SK-N-SH (cell line): ENCODE measurements at regions of chr2 and their contacts with region 1.

Region 1: GRCh38 chr2:20635675-20636584 is 15.0 kb downstream of the HS1BP3 start:
- DNase-seq: peak; percentile 98
- H3K4me3 ChIP-seq: peak overlapping the region in 1 of 2 experiments; percentile 27; a peak in 1 of 4 replicates
- H3K27ac ChIP-seq: peak overlapping the region; percentile 9 to 72; a peak in 3 of 4 replicates
- H3K4me1 ChIP-seq: peaks cover 16 to 21% of the 10 kb centered on the region in 2 experiments
- H3K27me3 ChIP-seq: no peaks in the 10 kb centered on the region
- CTCF ChIP-seq: peak; percentile 98
- EP300 ChIP-seq: peak in 1 of 2 experiments; percentile 37; a peak in 2 of 4 replicates
- RAD21 ChIP-seq: peak; percentile 100

Region 2: DNA sequence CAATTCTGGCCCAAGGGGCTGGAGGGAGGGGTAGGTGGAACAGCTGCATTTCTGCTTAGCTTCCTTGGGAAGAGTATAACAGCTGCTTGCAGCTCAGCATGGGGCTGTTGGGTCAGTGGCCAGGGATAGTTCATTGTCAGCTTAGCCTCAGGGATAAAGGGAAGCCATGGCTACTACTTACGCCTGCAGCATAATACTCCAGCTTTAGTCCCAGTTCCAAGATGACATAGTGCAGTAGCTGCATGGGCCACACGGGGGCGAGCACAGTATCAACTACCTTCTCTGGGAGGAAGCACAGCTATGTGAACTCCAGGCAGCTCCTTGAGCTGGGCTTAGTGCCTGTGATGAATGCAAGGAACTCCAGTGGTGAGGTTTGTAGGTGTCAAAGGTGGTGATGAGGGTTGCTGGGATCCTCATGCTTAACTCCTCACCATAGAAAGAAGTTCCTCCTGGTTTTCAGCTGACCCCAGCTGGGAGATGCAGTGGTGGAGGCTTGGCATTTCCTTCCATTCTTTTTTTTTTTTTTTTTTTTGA is 224.5 kb before region 1 on chr2:
- CTCF ChIA-PET with region 1: interaction called, 120 read pairs
- POLR2A ChIA-PET with region 1: no interaction called
- DNase-seq: peak; percentile 77
- H3K4me3 ChIP-seq: no peak overlapping the region
- H3K27ac ChIP-seq: no peak overlapping the region
- H3K4me1 ChIP-seq: no peaks in the 10 kb centered on the region
- H3K27me3 ChIP-seq: peaks cover 9% of the 10 kb centered on the region; the same call in 1 of the 2 replicates
- CTCF ChIP-seq: peak; percentile 87
- EP300 ChIP-seq: no peak
- RAD21 ChIP-seq: peak; percentile 70

Region 3: GRCh38 chr2:20438334-20439192 is 197.4 kb before region 1 on chr2:
- CTCF ChIA-PET with region 1: interaction called, 188 read pairs
- POLR2A ChIA-PET with region 1: interaction called, 6 read pairs
- DNase-seq: no peak
- H3K4me3 ChIP-seq: no peak overlapping the region
- H3K27ac ChIP-seq: peak overlapping the region in 1 of 2 experiments; percentile 6; a peak in 1 of 4 replicates
- H3K4me1 ChIP-seq: peaks cover 2 to 6% of the 10 kb centered on the region in 2 experiments; a peak in 2 of 4 replicates
- H3K27me3 ChIP-seq: no peaks in the 10 kb centered on the region; the same call in 1 of the 2 replicates
- CTCF ChIP-seq: no peak
- EP300 ChIP-seq: no peak
- RAD21 ChIP-seq: no peak

Region 4: DNA sequence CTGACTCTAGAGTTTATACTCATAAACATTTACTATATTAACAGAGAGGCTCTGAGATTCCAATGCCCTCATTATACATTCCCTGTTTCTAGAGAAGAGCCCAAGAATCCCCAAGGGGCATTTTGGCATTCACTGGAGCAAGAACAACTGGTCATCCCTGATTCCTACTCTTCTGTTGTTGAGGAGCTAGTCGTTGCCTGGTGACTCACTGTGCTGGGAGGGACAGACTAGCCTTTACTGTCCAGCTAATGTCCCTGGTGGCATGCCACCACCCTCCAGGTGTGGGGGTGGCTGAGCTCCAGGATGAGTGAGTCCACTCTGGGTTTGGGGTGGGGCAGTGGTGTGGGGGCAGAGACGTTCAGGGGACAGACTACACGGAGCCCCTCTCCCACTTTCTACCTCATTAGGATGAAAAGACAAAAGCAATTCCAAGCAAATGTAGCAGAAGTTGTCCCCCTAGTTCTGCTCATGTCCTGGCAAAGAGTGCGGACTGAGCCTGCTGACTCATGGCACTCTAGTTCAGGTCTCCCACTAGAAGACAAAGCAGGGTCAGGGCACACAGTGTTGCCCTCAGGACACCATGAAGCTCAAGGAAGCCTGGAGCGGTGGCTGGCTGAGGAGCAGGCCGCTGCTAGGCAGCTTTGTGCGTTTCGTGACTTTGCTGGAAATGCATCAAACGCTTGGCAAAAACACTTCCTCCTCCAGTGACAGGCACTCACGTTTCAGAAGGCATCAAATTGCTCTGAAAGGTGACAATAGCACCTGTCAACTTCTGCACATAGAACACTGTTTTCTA is 139.7 kb before region 1 on chr2:
- CTCF ChIA-PET with region 1: interaction called, 10 read pairs
- POLR2A ChIA-PET with region 1: no interaction called
- DNase-seq: no peak
- H3K4me3 ChIP-seq: no peak overlapping the region
- H3K27ac ChIP-seq: no peak overlapping the region
- H3K4me1 ChIP-seq: peaks cover 19 to 25% of the 10 kb centered on the region in 2 experiments
- H3K27me3 ChIP-seq: no peaks in the 10 kb centered on the region
- CTCF ChIP-seq: no peak
- EP300 ChIP-seq: no peak
- RAD21 ChIP-seq: no peak

Region 5: DNA sequence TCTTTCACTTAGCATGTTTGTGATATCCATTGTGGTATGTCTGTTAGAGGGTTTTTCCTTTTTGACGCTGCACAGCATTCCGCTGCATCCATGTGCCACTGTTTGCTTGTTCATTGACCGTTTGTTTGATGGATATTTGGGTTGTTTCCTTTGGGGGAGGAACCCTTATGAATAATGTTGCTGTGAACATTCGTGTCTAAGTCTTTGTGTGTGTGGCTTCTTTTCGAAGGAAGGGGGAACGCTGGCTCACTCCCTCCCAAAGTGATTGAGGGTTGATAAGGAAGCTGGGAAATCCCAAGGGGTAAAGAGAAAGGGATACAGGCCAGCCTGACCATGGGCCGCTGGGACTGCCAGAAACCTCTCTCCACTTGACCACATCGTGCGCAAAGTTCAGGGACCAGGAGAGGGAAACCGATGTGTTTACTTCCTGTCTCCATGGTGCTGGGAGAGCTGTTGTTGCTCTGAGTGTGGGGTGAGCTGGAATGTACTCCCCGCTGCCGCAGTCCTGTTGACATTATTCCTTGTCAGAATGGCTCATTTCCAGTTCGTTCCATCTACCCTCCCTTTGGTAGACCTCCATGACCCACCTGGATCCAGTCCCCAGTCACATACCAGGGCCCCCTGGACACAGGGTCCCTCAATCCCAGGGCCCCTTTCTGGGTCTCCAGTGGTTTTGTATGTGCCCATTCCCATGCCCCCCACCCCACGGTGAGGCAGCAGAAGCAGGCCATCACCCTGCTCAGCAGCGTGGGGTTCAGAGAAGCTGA is 24.7 kb before region 1 on chr2:
- CTCF ChIA-PET with region 1: interaction called, 107 read pairs
- POLR2A ChIA-PET with region 1: no interaction called
- DNase-seq: no peak
- H3K4me3 ChIP-seq: no peak overlapping the region
- H3K27ac ChIP-seq: no peak overlapping the region
- H3K4me1 ChIP-seq: peaks cover 5 to 25% of the 10 kb centered on the region in 2 experiments; a peak in 1 of 4 replicates
- H3K27me3 ChIP-seq: no peaks in the 10 kb centered on the region
- CTCF ChIP-seq: no peak
- EP300 ChIP-seq: no peak
- RAD21 ChIP-seq: no peak

Region 6: DNA sequence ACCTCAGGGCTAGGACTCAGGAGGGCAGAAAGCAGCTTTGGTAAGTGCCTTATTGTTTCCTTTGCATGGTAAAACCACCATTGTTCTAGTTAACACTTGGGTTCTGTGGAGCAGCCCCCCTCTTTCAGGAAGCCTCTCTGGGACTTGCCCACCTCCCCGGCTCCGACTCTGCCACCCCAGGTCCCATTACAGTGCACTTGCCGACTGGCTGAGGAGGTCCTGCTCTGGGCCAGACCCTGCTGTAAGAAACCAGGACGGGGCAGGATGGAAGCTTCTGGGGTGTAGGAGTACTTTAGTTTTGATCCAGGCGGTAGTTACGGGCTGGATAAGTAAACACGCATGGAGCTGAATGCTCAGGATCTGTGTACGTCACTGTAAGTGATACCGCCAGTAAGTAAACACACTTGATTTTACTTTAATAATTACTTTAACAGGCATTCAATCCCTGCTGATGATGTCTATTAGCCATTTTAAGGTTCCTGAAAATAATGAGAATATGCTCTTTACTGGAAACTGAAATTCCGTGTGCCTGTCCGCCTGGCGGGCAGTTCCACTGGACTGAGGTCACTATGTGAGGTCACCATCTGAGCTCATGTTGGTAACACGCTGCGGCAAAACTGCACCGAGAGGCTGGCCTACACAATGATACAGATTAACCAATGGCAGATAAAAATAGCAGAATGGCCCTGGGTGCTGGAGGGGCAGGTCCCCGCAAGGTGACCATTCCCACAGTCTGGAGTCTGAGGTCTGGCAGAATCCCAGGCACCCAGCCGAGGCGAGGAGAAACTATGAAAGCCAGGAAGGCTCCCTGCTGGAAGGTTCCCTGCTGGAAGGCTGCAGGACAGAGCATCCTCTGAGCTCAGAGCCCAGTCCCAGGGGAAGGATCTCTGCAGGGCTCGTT is 10.2 kb before region 1 on chr2:
- CTCF ChIA-PET with region 1: interaction called, 33 read pairs
- POLR2A ChIA-PET with region 1: no interaction called
- DNase-seq: no peak
- H3K4me3 ChIP-seq: no peak overlapping the region
- H3K27ac ChIP-seq: 0 out of 4 replicates have a peak overlapping the region, but pooled peaks of 1 of the 2 experiments have one; percentile 43
- H3K4me1 ChIP-seq: peaks cover 0 to 37% of the 10 kb centered on the region in 2 experiments; a peak in 1 of 4 replicates
- H3K27me3 ChIP-seq: no peaks in the 10 kb centered on the region
- CTCF ChIP-seq: no peak
- EP300 ChIP-seq: no peak
- RAD21 ChIP-seq: no peak

Region 7: GRCh38 chr2:20689428-20690264 is 53.7 kb after region 1 on chr2:
- CTCF ChIA-PET with region 1: no interaction called
- POLR2A ChIA-PET with region 1: no interaction called
- DNase-seq: no peak
- H3K4me3 ChIP-seq: no peak overlapping the region
- H3K27ac ChIP-seq: no peak overlapping the region
- H3K4me1 ChIP-seq: no peaks in the 10 kb centered on the region
- H3K27me3 ChIP-seq: no peaks in the 10 kb centered on the region
- CTCF ChIP-seq: no peak
- EP300 ChIP-seq: no peak
- RAD21 ChIP-seq: no peak

Region 8: DNA sequence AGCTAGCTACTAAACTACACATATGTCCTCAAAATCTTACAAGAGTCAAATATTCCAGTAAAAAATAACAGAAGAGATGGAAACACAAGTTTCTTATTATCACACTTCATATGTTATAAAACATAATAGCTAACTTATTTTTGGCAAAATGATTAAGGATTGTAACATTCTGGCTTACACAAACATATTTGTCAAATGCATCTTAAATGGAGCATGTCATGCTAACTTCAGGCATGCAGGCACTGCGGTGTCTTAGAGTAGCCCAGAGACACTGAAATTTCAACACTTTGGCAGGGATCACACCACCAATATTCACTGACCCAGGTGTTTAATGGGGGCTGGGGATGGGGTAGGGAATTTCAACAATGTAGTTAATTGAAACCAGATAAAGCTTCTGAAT is 135.4 kb after region 1 on chr2:
- CTCF ChIA-PET with region 1: no interaction called
- POLR2A ChIA-PET with region 1: no interaction called
- DNase-seq: no peak
- H3K4me3 ChIP-seq: no peak overlapping the region
- H3K27ac ChIP-seq: no peak overlapping the region
- H3K4me1 ChIP-seq: no peaks in the 10 kb centered on the region
- H3K27me3 ChIP-seq: no peaks in the 10 kb centered on the region
- CTCF ChIP-seq: no peak
- EP300 ChIP-seq: no peak
- RAD21 ChIP-seq: no peak